H1 (cell line): ENCODE measurements at regions of chrX and their contacts with region 1.

Region 1: GRCh38 chrX:69093960-69094871 is 71.0 kb downstream of the PJA1 start:
- DNase-seq: peak in 1 of 2 experiments; percentile 53
- H3K4me3 ChIP-seq: no peak overlapping the region
- H3K27ac ChIP-seq: no peak overlapping the region
- H3K4me1 ChIP-seq: 0 out of 7 replicates have a peak, but pooled peaks cover 0 to 3% (median 1%) of the 10 kb centered on the region in 4 experiments
- H3K27me3 ChIP-seq: no peaks in the 10 kb centered on the region
- CTCF ChIP-seq: peak; percentile 33 to 72 (median 36); a peak in 3 of 4 replicates
- EP300 ChIP-seq: no peak
- POLR2A ChIP-seq: no peak
- RAD21 ChIP-seq: peak; percentile 39 to 57

Region 2: GRCh38 chrX:69077895-69078455 is 16.2 kb before region 1 on chrX:
- CTCF ChIA-PET with region 1: interaction called, 12 read pairs
- POLR2A ChIA-PET with region 1: no interaction called
- DNase-seq: no peak
- H3K4me3 ChIP-seq: no peak overlapping the region
- H3K27ac ChIP-seq: no peak overlapping the region
- H3K4me1 ChIP-seq: peaks cover 0 to 15% (median 2%) of the 10 kb centered on the region in 4 experiments; a peak in 5 of 7 replicates
- H3K27me3 ChIP-seq: no peaks in the 10 kb centered on the region; a peak in 1 of 7 replicates
- CTCF ChIP-seq: no peak
- EP300 ChIP-seq: no peak
- POLR2A ChIP-seq: no peak
- RAD21 ChIP-seq: no peak

Region 3: GRCh38 chrX:69109683-69110082 is 15.5 kb after region 1 on chrX:
- CTCF ChIA-PET with region 1: interaction called, 11 read pairs
- POLR2A ChIA-PET with region 1: no interaction called
- DNase-seq: no peak
- H3K4me3 ChIP-seq: no peak overlapping the region
- H3K27ac ChIP-seq: no peak overlapping the region
- H3K4me1 ChIP-seq: peaks cover 0 to 8% (median 6%) of the 10 kb centered on the region in 4 experiments; a peak in 4 of 7 replicates
- H3K27me3 ChIP-seq: no peaks in the 10 kb centered on the region
- CTCF ChIP-seq: no peak
- EP300 ChIP-seq: no peak
- POLR2A ChIP-seq: no peak
- RAD21 ChIP-seq: no peak